Calu3 (cell line): ENCODE measurements at regions of chr3 and their contacts with region 1.

Region 1: GRCh38 chr3:175664911-175665310 is 805.8 kb downstream of the NAALADL2 start:
- DNase-seq: no peak
- H3K4me3 Mint-ChIP-seq: no peak overlapping the region
- H3K27ac Mint-ChIP-seq: no peak overlapping the region
- H3K4me1 Mint-ChIP-seq: no peaks in the 10 kb centered on the region
- H3K27me3 Mint-ChIP-seq: no peaks in the 10 kb centered on the region
- CTCF ChIP-seq: no peak

Region 2: DNA sequence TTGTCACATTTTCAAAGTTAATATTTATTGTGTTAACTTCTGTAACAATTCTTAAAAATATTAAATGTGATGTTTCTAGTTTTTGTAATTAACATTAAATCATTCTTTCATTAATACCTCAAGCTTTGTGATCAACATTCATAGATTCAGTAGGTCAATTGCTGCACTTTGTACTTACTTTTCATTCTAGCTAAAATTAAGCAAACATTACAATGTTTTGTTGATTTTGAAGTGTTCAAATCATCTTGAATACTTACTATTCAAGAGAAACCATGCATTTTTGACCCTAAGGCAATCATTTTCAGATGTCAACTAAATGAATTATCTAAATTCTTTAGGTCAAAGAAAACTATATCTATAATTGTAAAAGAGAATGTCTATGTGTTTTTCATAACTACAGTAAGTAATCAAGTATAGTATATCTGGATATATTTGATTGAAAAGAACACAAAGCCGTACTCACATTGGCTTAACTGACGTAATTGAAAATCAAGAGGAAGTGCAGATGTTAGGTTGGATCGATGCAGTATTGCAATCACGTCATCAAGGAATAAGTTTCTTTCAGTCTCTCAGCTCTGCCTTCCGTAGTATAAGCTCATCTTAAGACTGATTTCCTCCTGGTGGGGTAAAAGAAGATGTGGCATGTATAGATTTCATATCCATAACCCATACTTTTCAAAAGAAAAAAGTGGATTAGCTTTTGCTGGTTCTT is 127.5 kb after region 1 on chr3:
- CTCF ChIA-PET with region 1: no interaction called
- intact Hi-C with region 1: loop called (anchors 5 kb)
- DNase-seq: no peak
- H3K4me3 Mint-ChIP-seq: no peak overlapping the region
- H3K27ac Mint-ChIP-seq: no peak overlapping the region
- H3K4me1 Mint-ChIP-seq: peaks cover 9% of the 10 kb centered on the region
- H3K27me3 Mint-ChIP-seq: no peaks in the 10 kb centered on the region
- CTCF ChIP-seq: no peak